Naive thymus-derived CD4-positive, alpha-beta T cell (primary cell): ENCODE measurements at regions of chr5 and their contacts with region 1.

Region 1: DNA sequence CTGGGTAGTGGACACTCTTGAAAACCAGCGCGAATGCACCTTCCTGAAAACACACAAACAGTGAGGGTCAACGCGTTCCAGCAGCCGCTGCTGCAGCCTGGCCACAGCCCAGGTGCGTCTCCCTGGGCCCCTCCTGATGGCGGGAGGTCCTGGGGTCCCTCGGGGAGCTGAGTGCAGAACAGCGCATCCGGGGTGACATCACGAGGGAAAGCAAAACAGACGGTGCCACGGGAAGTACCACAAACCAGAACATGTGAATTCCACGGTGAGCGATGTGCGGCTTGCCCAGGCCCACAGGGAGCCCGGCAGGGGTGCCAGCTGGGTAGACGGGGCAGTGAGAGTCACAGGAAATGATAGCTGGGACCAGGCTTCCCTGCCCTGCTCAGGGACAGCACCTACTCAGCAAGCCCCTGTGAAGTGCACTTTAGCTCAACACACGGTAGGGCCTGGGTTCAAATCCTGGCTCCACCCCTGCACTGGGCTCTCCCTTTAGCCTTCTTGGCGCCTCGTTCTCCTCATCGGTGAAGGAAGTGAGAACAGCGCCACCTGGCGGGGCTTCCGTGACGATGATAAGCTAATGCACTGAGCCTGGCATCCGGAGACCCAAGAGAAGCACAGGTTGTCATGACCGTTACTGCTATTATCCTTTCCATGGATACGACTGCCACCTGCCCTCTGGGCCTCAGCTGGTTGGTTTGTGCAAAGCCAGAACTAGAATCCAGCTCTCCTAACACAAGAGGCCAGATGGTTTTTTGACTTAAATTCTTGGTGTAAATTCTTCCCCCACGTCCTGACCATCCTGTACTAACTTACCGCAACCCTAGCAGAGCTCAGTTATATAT is 24.6 kb downstream of the GFPT2 start:
- DNase-seq: peak; percentile 60 to 79 (median 75)
- ATAC-seq: peak; percentile 91
- H3K4me3 ChIP-seq: no peak overlapping the region
- H3K4me3 Mint-ChIP-seq: no peak overlapping the region
- H3K27ac ChIP-seq: no peak overlapping the region
- H3K27ac Mint-ChIP-seq: no peak overlapping the region
- H3K4me1 ChIP-seq: no peaks in the 10 kb centered on the region
- H3K4me1 Mint-ChIP-seq: peaks cover 0 to 3% (median 0%) of the 10 kb centered on the region in 7 donors
- H3K27me3 ChIP-seq: no peaks in the 10 kb centered on the region
- H3K27me3 Mint-ChIP-seq: peaks cover 4 to 19% (median 9%) of the 10 kb centered on the region in 5 donors

Region 2: DNA sequence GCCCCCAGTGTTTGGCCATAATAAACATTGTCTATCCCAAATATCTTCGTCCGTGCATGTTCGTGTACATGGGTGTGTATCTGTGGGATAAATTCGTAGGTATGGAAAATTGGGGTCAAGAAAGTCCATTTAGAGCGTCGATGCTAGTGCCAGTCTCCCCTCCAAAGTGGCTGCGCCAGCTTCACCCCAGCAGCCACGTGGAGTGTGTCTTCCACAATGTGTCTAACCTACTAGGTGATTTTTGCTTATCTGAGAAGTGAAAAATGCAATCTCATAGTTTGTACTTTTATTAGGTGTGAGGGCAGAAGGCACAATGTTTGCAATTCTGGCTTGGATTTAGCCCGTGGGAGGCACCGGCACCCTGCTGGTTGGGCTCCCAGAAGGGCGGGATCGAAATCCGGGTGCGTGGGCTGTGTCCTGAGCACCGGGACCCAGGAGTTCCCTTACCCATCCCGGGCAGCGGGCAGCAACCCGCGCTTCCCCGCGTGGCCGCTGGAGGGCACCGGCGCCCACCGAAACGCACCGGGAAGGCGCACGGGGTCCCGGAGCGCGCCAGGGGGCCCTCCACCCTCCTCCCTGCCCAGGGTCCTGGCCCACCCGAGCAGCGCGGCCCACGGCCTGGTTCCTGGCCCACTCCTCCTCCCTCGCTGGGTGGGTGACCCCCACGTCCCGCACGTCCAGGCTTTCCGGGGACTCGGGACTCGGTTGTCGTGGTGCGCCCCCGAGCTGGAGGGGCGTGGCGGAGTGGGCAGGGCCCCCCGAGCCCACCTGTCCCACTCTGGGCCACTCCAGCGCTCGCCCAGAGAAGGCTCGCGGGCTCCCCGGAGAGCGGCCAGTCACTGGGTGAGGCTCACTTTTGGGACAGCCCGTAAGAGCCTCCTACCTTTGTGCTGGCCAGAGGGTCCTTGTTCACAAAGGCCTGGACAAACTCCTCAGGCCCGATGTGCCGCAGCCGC is 201.5 kb before region 1 on chr5:
- CTCF ChIA-PET with region 1: interaction called, 3 read pairs
- POLR2A ChIA-PET with region 1: no interaction called
- intact Hi-C with region 1: loop called (anchors 1 to 2 kb)
- DNase-seq: peak in 5 of 9 donors; percentile 17 to 60 (median 19)
- ATAC-seq: peak; percentile 69
- H3K4me3 ChIP-seq: no peak overlapping the region
- H3K4me3 Mint-ChIP-seq: no peak overlapping the region
- H3K27ac ChIP-seq: no peak overlapping the region
- H3K27ac Mint-ChIP-seq: no peak overlapping the region
- H3K4me1 ChIP-seq: no peaks in the 10 kb centered on the region
- H3K4me1 Mint-ChIP-seq: peaks cover 0 to 3% (median 0%) of the 10 kb centered on the region in 7 donors
- H3K27me3 ChIP-seq: no peaks in the 10 kb centered on the region
- H3K27me3 Mint-ChIP-seq: peaks cover 6 to 25% (median 24%) of the 10 kb centered on the region in 5 donors

Region 3: GRCh38 chr5:180305481-180305880 is 23.0 kb before region 1 on chr5:
- CTCF ChIA-PET with region 1: interaction called, 11 read pairs
- POLR2A ChIA-PET with region 1: no interaction called
- intact Hi-C with region 1: no loop called
- DNase-seq: no peak
- ATAC-seq: no peak
- H3K4me3 ChIP-seq: no peak overlapping the region
- H3K4me3 Mint-ChIP-seq: no peak overlapping the region
- H3K27ac ChIP-seq: no peak overlapping the region
- H3K27ac Mint-ChIP-seq: no peak overlapping the region
- H3K4me1 ChIP-seq: no peaks in the 10 kb centered on the region
- H3K4me1 Mint-ChIP-seq: no peaks in the 10 kb centered on the region
- H3K27me3 ChIP-seq: no peaks in the 10 kb centered on the region
- H3K27me3 Mint-ChIP-seq: peaks cover 0 to 12% (median 0%) of the 10 kb centered on the region in 5 donors